CD14-positive monocyte (primary cell): ENCODE measurements at regions of chr10 and their contacts with region 1.

Region 1: DNA sequence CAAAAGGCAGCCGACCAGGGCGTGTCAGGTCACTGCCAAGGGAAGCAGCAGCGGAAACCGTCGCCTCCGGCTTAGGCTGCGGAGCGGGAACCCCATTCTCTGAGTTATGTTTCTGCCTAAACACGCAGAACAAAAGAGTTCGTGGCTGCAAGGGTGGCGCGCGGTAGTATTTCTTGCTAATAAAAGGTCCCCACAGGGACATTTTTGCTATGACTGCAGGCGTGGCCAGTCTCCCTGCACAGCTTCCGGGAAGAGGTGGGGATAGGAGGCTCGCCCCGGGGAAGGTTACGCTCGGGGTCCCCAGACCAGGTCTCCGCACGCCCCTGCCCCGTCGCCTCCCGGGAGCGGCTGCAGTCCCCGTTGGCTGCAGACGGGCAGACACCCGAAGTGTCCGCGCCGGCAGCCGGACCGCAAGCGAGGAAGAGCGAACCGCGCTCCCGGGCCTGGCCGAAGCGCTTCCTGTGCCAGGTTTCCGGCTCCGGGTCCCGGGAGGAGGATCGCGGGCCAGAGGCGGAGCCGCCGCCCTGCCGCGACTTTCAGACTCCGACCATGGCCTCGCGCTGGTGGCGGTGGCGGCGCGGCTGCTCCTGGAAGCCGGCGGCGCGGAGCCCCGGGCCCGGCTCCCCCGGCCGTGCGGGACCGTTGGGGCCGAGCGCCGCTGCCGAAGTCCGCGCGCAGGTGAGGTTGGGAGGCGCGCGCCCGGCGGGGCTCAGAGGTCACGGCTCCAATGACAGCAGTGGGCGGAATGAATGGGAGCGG is at the start of gene PDSS1:
- DNase-seq: peak; percentile 52 to 95 (median 81)
- H3K4me3 ChIP-seq: peak within 1 kb of the TSS; percentile 77 to 95 (median 80)
- H3K4me3 Mint-ChIP-seq: peak within 1 kb of the TSS; percentile 94 to 95
- H3K27ac ChIP-seq: peak within 1 kb of the TSS; percentile 87
- H3K27ac Mint-ChIP-seq: peak within 1 kb of the TSS; percentile 89 to 96 (median 95)
- H3K4me1 ChIP-seq: peaks cover 49 to 59% of the 10 kb centered on the region in 2 donors
- H3K4me1 Mint-ChIP-seq: peaks cover 69% of the 10 kb centered on the region
- H3K27me3 ChIP-seq: no peaks in the 10 kb centered on the region
- H3K27me3 Mint-ChIP-seq: no peaks in the 10 kb centered on the region
- CTCF ChIP-seq: no peak
- polyA plus RNA-seq, gene PDSS1: 12.1 to 13.1 (median 12.6) TPM

Region 2: DNA sequence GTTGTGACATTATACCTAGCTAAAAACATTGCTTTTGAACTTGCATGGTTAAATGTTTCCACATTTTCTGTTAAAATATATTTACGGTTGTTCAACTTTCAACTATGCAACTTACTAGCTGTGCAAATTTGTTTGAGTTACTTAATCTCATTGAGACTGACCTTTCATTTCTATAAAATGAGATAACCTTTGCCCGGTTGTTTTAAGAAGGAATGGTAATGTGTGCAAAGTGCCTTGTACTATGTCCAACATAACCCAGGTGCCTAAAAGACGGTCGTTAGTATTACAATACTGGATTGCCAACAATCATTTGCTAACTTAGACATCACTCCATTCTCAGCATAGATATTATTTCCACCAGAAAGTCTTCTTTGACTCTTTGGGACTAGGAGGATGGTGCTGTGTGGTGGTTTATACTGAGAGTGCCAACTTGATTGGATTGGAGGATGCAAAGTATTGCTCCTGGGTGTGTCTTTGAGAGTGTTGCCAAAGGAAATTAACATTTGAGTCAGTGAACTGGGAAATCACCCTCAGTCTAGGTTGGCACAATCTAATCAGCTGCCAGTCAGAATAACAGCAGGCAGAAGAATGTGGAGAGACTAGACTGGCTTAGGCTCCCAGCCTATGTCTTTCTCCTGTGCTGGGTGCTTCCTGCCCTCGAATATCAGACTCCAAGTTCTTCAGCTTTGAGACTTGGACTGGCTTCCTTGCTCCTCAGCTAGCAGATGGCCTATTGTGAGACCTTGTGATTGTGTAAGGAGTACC is 85.0 kb before region 1 on chr10:
- intact Hi-C with region 1: loop called in 1 of 2 experiments (anchors 10 kb)
- DNase-seq: no peak
- H3K4me3 ChIP-seq: no peak overlapping the region
- H3K4me3 Mint-ChIP-seq: no peak overlapping the region
- H3K27ac ChIP-seq: no peak overlapping the region
- H3K27ac Mint-ChIP-seq: no peak overlapping the region
- H3K4me1 ChIP-seq: no peaks in the 10 kb centered on the region
- H3K4me1 Mint-ChIP-seq: no peaks in the 10 kb centered on the region
- H3K27me3 ChIP-seq: no peaks in the 10 kb centered on the region
- H3K27me3 Mint-ChIP-seq: peaks cover 1 to 3% (median 1%) of the 10 kb centered on the region in 3 donors
- CTCF ChIP-seq: no peak

Region 3: GRCh38 chr10:26737730-26738129 is 40.4 kb after region 1 on chr10:
- intact Hi-C with region 1: no loop called
- DNase-seq: peak; percentile 74 to 96 (median 82)
- H3K4me3 ChIP-seq: no peak overlapping the region
- H3K4me3 Mint-ChIP-seq: no peak overlapping the region
- H3K27ac ChIP-seq: peak overlapping the region; percentile 63 to 81
- H3K27ac Mint-ChIP-seq: peak overlapping the region; percentile 80 to 90 (median 85)
- H3K4me1 ChIP-seq: peaks cover 4 to 7% of the 10 kb centered on the region in 2 donors
- H3K4me1 Mint-ChIP-seq: peaks cover 5% of the 10 kb centered on the region
- H3K27me3 ChIP-seq: no peaks in the 10 kb centered on the region
- H3K27me3 Mint-ChIP-seq: no peaks in the 10 kb centered on the region
- CTCF ChIP-seq: no peak

Region 4: GRCh38 chr10:26860443-26861204 is 163.3 kb after region 1 on chr10 and contains the start of gene ABI1:
- intact Hi-C with region 1: loop called (anchors 10 kb)
- DNase-seq: peak; percentile 97 to 99 (median 99)
- H3K4me3 ChIP-seq: peak within 1 kb of the TSS; percentile 86 to 99 (median 89)
- H3K4me3 Mint-ChIP-seq: peak within 1 kb of the TSS; percentile 97 to 98
- H3K27ac ChIP-seq: peak within 1 kb of the TSS; percentile 95 to 96
- H3K27ac Mint-ChIP-seq: peak within 1 kb of the TSS; percentile 94 to 99 (median 98)
- H3K4me1 ChIP-seq: peaks cover 43 to 60% of the 10 kb centered on the region in 2 donors
- H3K4me1 Mint-ChIP-seq: peaks cover 47% of the 10 kb centered on the region
- H3K27me3 ChIP-seq: no peaks in the 10 kb centered on the region
- H3K27me3 Mint-ChIP-seq: peaks cover 2 to 5% (median 2%) of the 10 kb centered on the region in 3 donors
- CTCF ChIP-seq: no peak
- polyA plus RNA-seq, gene ABI1: 39.8 to 77.2 (median 61.5) TPM